ENCODE measurements at regions of chr2 and their contacts with region 1.

Region 1: GRCh38 chr2:64453770-64454385 is at the start of gene LGALSL:
- DNase-seq: peak; percentile 50 to 90
- H3K4me3 ChIP-seq: peak within 1 kb of the TSS; percentile 76 to 93
- H3K27ac ChIP-seq: peak within 1 kb of the TSS; percentile 98 to 99
- H3K4me1 ChIP-seq: peaks cover 5% of the 10 kb centered on the region in 2 donors
- H3K27me3 ChIP-seq: no peaks in the 10 kb centered on the region
- CTCF ChIP-seq: no peak
- total RNA-seq, gene LGALSL: 35.4 TPM

Region 2: GRCh38 chr2:63588385-63589147 is 865.3 kb before region 1 on chr2 and contains the starts of genes MDH1 and WDPCP:
- intact Hi-C with region 1: loop called (anchors 10 kb)
- DNase-seq: peak; percentile 90 to 97
- H3K4me3 ChIP-seq: peak within 1 kb of the TSS; percentile 66 to 83
- H3K27ac ChIP-seq: peak within 1 kb of the TSS; percentile 88
- H3K4me1 ChIP-seq: peaks cover 5 to 16% of the 10 kb centered on the region in 2 donors
- H3K27me3 ChIP-seq: no peaks in the 10 kb centered on the region
- CTCF ChIP-seq: no peak
- total RNA-seq, gene MDH1: 65.7 TPM
- total RNA-seq, gene WDPCP: 5.2 TPM

Region 3: DNA sequence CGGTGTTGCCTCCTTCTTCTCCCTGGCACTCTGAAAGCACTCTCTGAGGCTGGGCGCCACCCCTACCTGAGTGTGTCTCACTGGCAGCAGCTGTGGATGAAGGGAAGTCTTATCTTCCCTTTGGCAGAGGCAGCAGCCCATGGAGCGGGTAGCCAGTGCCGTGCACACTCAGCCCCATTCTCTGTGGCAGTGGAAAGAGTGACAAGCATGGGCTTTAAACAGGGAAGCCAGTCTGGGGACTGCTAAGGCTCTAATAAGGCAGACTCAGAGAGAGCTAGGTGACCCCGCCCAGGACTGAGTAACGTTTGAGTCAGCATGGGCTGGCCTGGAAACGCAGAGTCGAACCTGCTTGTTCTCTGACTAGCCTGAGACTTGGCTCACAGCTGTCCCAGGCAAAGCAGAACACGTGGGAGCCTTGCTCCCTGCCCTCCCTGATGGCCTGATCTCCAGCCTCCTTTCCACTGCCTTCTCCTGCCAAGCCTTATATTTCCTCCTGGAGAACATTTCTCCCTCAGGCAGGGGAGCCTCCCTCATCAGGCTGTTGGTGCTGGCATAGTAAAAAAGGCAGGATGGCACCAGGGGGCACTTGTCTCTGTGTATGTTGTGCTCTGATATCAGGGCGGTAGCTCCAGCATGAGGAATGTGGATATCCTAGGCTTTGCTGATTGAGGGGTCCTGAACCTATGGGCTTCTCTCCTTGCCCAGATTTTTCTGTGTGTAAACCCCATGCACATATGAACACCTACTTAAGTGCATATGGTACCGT is 93.8 kb before region 1 on chr2:
- intact Hi-C with region 1: loop called (anchors 1 kb)
- DNase-seq: peak; percentile 90 to 97
- H3K4me3 ChIP-seq: no peak overlapping the region
- H3K27ac ChIP-seq: peak overlapping the region; percentile 72 to 78
- H3K4me1 ChIP-seq: peaks cover 0 to 10% of the 10 kb centered on the region in 2 donors
- H3K27me3 ChIP-seq: no peaks in the 10 kb centered on the region
- CTCF ChIP-seq: no peak

Region 4: DNA sequence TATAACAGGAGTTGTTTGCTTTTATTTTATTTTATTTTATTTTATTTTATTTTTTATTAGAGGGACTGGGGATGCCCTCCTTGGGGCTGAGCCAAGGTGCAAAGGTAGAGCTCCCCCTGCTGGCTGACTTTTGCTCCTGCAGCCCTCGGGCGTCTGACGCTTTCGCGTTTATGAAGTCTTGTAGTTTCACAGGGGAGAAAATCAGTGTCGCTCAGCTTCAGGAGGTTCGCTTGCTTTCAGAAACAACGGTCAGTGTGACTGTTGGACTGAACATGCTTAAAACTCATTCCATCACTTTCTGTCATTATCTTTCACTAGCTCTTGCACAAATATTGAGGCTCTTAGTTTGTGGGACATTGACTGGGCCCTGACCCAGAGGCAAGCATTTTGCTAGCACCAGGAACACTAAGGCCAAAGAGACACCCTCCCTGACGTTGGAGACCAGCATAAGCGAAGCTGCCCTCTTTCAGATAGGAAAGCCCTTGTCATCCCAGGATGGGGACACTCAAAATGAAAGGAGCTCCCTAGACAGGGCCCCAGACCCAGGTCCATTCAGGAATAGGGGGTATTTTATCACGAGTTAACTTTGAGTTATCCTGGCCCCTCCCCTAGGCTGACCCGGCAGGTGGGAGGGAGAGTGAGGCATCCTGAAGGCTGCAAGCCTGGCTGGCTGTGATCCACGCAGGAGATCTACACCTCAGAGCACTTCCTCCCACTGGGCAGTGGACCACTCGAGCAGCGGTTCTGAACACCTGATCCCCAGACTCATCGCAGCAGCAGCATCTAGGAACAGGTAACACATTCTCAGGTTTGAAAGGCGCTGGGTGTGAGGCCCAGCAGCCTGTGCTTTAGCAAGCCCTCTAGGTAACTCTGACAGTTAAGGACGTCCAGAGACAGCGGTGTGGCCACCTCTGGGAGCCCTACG is 34.4 kb after region 1 on chr2:
- intact Hi-C with region 1: loop called (anchors 1 kb)
- DNase-seq: peak in 1 of 2 donors; percentile 72
- H3K4me3 ChIP-seq: no peak overlapping the region
- H3K27ac ChIP-seq: no peak overlapping the region
- H3K4me1 ChIP-seq: peaks cover 0 to 17% of the 10 kb centered on the region in 2 donors
- H3K27me3 ChIP-seq: no peaks in the 10 kb centered on the region
- CTCF ChIP-seq: peak; percentile 80 to 97 (median 97)

Region 5: DNA sequence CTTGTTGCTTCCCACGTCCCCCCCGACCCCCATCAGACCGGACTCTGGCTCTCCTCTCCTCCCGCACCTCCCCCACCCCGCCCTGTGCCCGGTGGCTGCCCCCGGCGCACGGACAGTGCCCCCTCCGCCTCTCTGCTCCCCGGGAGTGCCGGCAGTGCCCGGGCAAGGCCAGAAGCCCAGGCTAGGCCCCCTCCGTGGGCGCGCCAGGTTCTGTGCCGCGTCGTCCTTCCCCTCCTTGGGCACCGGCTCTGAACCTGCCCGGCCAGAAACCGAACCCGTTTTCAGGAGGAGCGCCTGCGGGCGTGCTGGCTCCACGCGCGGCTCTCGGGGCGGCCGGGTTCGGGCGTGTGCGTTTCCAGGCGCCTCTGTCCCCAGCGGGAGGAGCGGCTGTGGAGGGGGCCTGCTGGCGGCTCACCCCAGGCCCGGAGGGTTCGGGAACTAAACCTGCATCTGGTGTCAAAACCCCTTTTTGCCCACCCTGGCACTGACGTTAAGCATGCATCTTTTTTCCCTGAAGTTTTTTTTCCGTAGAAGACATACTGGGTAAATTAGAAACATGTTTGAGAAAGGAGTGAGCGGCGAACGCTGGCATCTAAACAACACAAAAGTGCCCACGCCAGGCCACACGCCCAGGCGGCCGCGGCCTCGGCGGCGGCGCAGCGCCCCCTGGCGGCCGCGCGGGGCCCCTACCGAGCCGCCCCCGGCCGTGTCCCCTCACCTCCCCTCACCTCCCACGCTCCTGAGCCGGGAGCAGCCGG is 411.4 kb after region 1 on chr2:
- intact Hi-C with region 1: loop called (anchors 10 kb)
- DNase-seq: peak in 1 of 2 donors; percentile 84
- H3K4me3 ChIP-seq: peak overlapping the region; percentile 71 to 75
- H3K27ac ChIP-seq: peak overlapping the region; percentile 80 to 82
- H3K4me1 ChIP-seq: peaks cover 0 to 4% of the 10 kb centered on the region in 2 donors
- H3K27me3 ChIP-seq: no peaks in the 10 kb centered on the region
- CTCF ChIP-seq: peak; percentile 41 to 98 (median 47)

Region 6: DNA sequence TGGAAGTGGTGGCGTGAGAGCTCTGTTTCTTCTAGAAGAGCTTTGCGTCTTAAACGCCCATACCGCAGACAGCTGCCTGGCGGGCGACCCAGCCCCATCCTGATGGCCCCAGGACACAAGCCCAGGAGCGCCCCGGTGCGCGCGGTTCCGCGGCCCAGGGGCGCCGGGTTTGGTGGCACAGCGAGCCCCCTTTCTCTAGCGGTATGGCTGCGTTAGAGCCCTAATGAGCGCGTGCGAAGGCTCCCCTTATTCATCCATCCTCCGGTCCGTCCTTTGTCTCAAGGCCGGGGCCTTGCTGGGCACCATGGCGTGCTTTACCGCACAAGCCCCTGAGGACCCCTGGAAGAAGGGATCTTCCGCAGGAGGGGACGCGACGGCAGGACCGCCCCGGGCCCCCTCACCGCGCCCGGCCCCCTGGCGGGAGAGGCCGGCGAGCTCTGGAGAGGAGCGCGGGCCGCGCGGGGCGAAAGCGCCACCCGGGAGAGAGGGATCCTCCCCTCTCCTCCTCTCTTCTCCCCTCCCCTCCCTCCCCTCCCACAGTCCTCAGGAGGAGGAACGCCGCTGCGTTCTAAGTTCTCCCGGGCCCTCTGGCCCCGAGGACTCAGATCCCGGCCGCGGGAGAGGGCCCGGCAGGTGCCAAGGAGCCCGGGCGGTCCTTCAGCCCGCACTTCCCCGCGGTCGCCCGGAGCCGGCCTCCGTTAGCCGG is 534.7 kb after region 1 on chr2:
- intact Hi-C with region 1: no loop called
- DNase-seq: peak in 1 of 2 donors; percentile 80
- H3K4me3 ChIP-seq: peak overlapping the region; percentile 99
- H3K27ac ChIP-seq: peak overlapping the region; percentile 97 to 99
- H3K4me1 ChIP-seq: peaks cover 0 to 27% of the 10 kb centered on the region in 2 donors
- H3K27me3 ChIP-seq: no peaks in the 10 kb centered on the region
- CTCF ChIP-seq: peak; percentile 53 to 55 (median 54)

Measured in ascending aorta (tissue), 2 donors.